CD8-positive, alpha-beta T cell (primary cell): ENCODE measurements at regions of chr14 and their contacts with region 1.

Region 1: DNA sequence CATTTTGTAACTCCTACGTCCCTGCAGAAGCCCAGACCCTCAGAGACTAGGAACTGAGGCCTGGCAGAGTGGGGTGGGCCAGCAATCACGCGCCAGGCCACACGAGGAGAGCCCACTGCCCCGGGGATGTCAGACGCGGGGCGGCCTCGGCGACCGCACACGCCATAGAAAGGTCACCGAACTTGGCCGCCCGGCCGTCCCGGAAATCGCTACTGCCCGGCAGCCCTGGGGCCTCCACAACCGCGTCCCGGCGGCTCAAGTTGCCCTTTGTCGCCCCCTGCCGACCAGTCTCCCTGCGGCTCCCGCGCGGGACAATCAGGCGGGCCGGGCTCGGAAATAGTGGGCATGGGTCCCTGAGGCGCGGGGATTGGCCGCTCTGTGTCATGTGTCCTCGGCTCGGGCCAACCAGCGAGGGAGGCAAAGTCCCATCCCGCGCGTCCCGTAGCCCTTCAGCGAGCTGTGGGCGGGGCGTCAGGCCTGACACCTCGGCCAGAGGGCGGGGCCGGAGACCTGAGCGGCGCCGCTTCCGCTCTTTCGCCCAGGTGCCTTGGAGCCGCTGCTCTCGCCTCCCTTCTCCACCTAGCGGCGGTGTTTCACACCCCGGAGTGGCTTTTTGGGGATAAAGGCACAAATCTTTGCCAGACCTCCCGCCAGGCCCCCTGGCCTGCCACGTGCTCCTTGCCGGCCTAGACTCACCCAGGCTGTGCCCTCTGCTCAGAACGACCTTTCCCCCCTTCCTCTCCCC is 33.4 kb upstream of the DEGS2 start:
- DNase-seq: peak; percentile 99 to 100 (median 99)
- ATAC-seq: peak; percentile 98
- H3K4me3 ChIP-seq: peak overlapping the region; percentile 54 to 57
- H3K4me3 Mint-ChIP-seq: peak overlapping the region; percentile 63
- H3K27ac ChIP-seq: peak overlapping the region; percentile 48 to 90
- H3K27ac Mint-ChIP-seq: peak overlapping the region; percentile 90
- H3K4me1 ChIP-seq: peaks cover 12% of the 10 kb centered on the region
- H3K4me1 Mint-ChIP-seq: peaks cover 10% of the 10 kb centered on the region
- H3K27me3 ChIP-seq: no peaks in the 10 kb centered on the region
- H3K27me3 Mint-ChIP-seq: no peaks in the 10 kb centered on the region
- CTCF ChIP-seq: peak; percentile 81

Region 2: GRCh38 chr14:99982537-99983250 is 210.2 kb before region 1 on chr14:
- CTCF ChIA-PET with region 1: interaction called, 80 read pairs
- POLR2A ChIA-PET with region 1: interaction called, 3 read pairs
- intact Hi-C with region 1: loop called (anchors 1 kb)
- DNase-seq: peak; percentile 30 to 85 (median 65)
- ATAC-seq: peak; percentile 100
- H3K4me3 ChIP-seq: no peak overlapping the region
- H3K4me3 Mint-ChIP-seq: no peak overlapping the region
- H3K27ac ChIP-seq: no peak overlapping the region
- H3K27ac Mint-ChIP-seq: no peak overlapping the region
- H3K4me1 ChIP-seq: peaks cover 10% of the 10 kb centered on the region
- H3K4me1 Mint-ChIP-seq: peaks cover 12% of the 10 kb centered on the region
- H3K27me3 ChIP-seq: no peaks in the 10 kb centered on the region
- H3K27me3 Mint-ChIP-seq: no peaks in the 10 kb centered on the region
- CTCF ChIP-seq: peak; percentile 95

Region 3: GRCh38 chr14:100067971-100068959 is 124.6 kb before region 1 on chr14:
- CTCF ChIA-PET with region 1: interaction called, 16 read pairs
- POLR2A ChIA-PET with region 1: interaction called, 3 read pairs
- intact Hi-C with region 1: no loop called
- DNase-seq: peak; percentile 70 to 98 (median 88)
- ATAC-seq: peak; percentile 50
- H3K4me3 ChIP-seq: peak overlapping the region; percentile 73 to 85
- H3K4me3 Mint-ChIP-seq: peak overlapping the region; percentile 100
- H3K27ac ChIP-seq: peak overlapping the region; percentile 83 to 87
- H3K27ac Mint-ChIP-seq: peak overlapping the region; percentile 99
- H3K4me1 ChIP-seq: peaks cover 59% of the 10 kb centered on the region
- H3K4me1 Mint-ChIP-seq: peaks cover 82% of the 10 kb centered on the region
- H3K27me3 ChIP-seq: no peaks in the 10 kb centered on the region
- H3K27me3 Mint-ChIP-seq: no peaks in the 10 kb centered on the region
- CTCF ChIP-seq: no peak

Region 4: GRCh38 chr14:100147181-100147631 is 45.6 kb before region 1 on chr14:
- CTCF ChIA-PET with region 1: interaction called, 8 read pairs
- POLR2A ChIA-PET with region 1: interaction called, 7 read pairs
- intact Hi-C with region 1: loop called (anchors 1 kb)
- DNase-seq: peak; percentile 42 to 87 (median 75)
- ATAC-seq: peak; percentile 89
- H3K4me3 ChIP-seq: peak overlapping the region; percentile 24 to 34
- H3K4me3 Mint-ChIP-seq: peak overlapping the region; percentile 77
- H3K27ac ChIP-seq: peak overlapping the region; percentile 3 to 39
- H3K27ac Mint-ChIP-seq: peak overlapping the region; percentile 89
- H3K4me1 ChIP-seq: peaks cover 24% of the 10 kb centered on the region
- H3K4me1 Mint-ChIP-seq: peaks cover 34% of the 10 kb centered on the region
- H3K27me3 ChIP-seq: no peaks in the 10 kb centered on the region
- H3K27me3 Mint-ChIP-seq: no peaks in the 10 kb centered on the region
- CTCF ChIP-seq: peak; percentile 7

Region 5: DNA sequence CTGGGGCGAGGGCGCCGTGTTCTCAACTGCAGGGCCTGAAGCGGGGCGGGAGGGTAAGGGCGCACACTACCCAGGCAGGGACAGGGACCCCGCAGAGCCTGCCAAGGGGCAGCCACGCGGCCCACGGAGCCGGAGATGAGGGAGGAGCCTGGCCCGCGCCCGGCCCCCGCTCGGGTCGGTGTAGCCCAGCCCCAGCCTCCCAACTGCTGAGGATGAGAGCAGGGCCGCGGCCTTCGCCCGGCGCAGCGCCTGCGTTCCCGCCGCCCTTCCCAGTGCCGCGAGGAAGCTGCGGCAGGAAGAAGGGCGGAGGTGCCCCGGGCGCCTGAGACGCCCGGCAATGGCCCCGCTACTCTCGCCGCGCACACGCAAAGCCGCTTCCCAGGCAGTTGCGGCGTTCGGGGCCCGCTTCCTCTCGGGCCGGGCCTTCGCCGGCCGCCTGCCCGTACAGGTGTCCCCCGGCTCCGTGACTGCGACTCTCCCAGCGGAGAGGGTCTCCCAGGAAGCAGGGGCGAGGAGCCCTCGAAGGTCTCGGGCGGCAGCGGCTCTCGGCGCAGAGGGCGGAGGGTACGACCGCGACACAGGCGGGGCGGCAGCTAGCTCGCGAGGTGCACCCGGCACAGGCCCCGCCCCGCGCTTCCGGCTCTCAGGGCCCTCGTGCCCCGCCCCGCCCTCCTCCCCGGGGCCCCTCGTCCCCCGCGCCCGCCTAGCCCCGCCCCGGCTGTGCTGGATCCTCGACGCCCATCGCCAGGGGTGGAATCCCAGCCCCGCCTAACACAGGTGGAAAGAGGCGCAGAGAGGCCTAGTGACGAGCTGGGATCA is 21.3 kb after region 1 on chr14:
- CTCF ChIA-PET with region 1: interaction called, 10 read pairs
- POLR2A ChIA-PET with region 1: interaction called, 8 read pairs
- intact Hi-C with region 1: loop called (anchors 1 kb)
- DNase-seq: peak; percentile 78 to 95 (median 92)
- ATAC-seq: peak; percentile 97
- H3K4me3 ChIP-seq: peak overlapping the region; percentile 70 to 92
- H3K4me3 Mint-ChIP-seq: peak overlapping the region; percentile 80
- H3K27ac ChIP-seq: peak overlapping the region; percentile 88 to 90
- H3K27ac Mint-ChIP-seq: peak overlapping the region; percentile 90
- H3K4me1 ChIP-seq: peaks cover 33% of the 10 kb centered on the region
- H3K4me1 Mint-ChIP-seq: peaks cover 29% of the 10 kb centered on the region
- H3K27me3 ChIP-seq: no peaks in the 10 kb centered on the region
- H3K27me3 Mint-ChIP-seq: no peaks in the 10 kb centered on the region
- CTCF ChIP-seq: no peak

Region 6: DNA sequence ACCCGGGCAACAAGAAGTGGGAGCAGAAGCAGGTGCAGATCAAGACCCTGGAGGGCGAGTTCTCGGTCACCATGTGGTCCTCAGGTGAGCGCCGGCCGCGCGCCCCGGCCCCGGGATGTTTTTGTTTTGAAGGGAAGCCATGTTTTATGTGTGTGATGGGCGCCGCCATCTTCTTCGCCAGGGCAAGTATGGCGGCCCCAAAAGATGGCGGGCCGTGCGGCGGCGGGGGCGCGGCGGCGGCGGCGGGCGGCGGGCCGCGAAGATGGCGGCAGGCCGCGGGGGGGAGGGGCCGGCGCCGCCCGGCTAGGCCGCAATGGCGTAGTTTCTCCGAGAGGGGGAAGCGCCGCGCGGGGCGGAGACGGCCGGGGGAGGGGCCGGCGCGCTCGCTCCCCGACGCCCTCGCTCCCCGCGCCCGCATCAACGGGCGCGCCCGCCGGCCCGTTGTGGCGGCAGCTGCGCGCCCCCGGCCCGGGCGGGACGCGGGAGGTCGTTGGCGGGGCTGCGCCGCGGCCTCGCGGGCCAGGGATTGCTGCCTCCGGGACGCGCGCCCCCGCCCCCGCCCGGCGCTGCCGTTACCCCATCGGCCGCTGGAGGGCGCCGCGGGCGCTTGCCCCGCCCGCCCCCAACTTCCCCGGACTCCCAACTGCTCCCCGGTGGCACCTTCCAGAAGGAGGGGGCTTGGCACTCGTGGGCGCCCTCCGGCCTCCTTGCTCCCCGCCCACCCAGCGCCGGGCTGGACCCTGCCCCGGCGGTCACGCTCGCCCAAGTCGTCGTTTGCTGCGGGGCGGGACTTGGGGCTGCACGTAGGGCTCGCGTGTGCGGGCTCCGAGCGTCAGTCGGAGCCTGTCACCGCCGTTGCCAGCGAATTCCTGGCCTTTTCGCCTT is 47.2 kb after region 1 on chr14:
- CTCF ChIA-PET with region 1: interaction called, 19 read pairs
- POLR2A ChIA-PET with region 1: interaction called, 9 read pairs
- intact Hi-C with region 1: loop called (anchors 1 kb)
- DNase-seq: peak; percentile 68 to 92 (median 84)
- ATAC-seq: peak; percentile 36
- H3K4me3 ChIP-seq: peak overlapping the region; percentile 66 to 77
- H3K4me3 Mint-ChIP-seq: peak overlapping the region; percentile 90
- H3K27ac ChIP-seq: peak overlapping the region; percentile 56 to 85
- H3K27ac Mint-ChIP-seq: peak overlapping the region; percentile 94
- H3K4me1 ChIP-seq: peaks cover 56% of the 10 kb centered on the region
- H3K4me1 Mint-ChIP-seq: peaks cover 59% of the 10 kb centered on the region
- H3K27me3 ChIP-seq: no peaks in the 10 kb centered on the region
- H3K27me3 Mint-ChIP-seq: no peaks in the 10 kb centered on the region
- CTCF ChIP-seq: peak; percentile 54

Region 7: DNA sequence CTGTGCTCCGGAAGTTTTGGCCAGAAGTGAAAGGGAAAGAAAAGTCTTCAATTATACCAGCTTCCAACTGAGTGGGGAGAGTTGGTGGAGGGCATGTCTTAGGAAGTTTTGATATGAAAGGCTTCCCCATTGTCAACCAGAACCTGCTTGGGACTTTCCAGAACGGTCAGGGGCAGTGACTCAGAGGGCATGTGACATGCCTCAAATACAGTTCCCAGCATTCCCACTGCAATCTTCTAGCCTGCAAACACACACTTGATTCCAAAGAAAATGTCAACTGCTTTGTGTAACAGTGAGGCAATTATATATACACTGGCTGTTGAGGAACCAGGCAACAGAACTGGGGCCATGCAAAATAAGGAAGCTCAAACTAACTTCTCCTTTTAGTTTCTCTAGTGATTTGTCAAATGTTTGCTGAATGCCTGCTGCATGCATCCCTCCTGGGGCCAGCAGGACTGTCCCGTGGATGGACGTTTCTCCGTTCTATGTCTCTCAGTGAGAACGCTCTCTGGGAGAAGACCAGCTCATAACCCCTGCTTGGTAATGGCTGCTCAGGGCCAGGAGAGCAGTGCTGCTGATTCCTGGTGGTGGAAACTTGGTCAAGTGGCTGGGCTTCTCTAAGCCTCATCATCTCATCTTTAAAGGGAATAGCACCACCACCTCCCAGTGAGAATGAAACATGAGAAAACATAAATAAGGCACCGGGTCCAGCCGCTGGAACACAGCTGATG is 148.6 kb after region 1 on chr14:
- CTCF ChIA-PET with region 1: no interaction called
- POLR2A ChIA-PET with region 1: no interaction called
- intact Hi-C with region 1: no loop called
- DNase-seq: peak in 1 of 9 experiments; percentile 41
- ATAC-seq: no peak
- H3K4me3 ChIP-seq: no peak overlapping the region
- H3K4me3 Mint-ChIP-seq: no peak overlapping the region
- H3K27ac ChIP-seq: no peak overlapping the region
- H3K27ac Mint-ChIP-seq: no peak overlapping the region
- H3K4me1 ChIP-seq: no peaks in the 10 kb centered on the region
- H3K4me1 Mint-ChIP-seq: no peaks in the 10 kb centered on the region
- H3K27me3 ChIP-seq: no peaks in the 10 kb centered on the region
- H3K27me3 Mint-ChIP-seq: no peaks in the 10 kb centered on the region
- CTCF ChIP-seq: no peak

Region 8: GRCh38 chr14:100850841-100851585 is 658.2 kb after region 1 on chr14:
- CTCF ChIA-PET with region 1: no interaction called
- POLR2A ChIA-PET with region 1: no interaction called
- intact Hi-C with region 1: no loop called
- DNase-seq: peak; percentile 63 to 89 (median 73)
- ATAC-seq: peak; percentile 69
- H3K4me3 ChIP-seq: no peak overlapping the region
- H3K4me3 Mint-ChIP-seq: no peak overlapping the region
- H3K27ac ChIP-seq: no peak overlapping the region
- H3K27ac Mint-ChIP-seq: no peak overlapping the region
- H3K4me1 ChIP-seq: peaks cover 5% of the 10 kb centered on the region
- H3K4me1 Mint-ChIP-seq: no peaks in the 10 kb centered on the region
- H3K27me3 ChIP-seq: no peaks in the 10 kb centered on the region
- H3K27me3 Mint-ChIP-seq: no peaks in the 10 kb centered on the region
- CTCF ChIP-seq: peak; percentile 59